Activated B cell treated with CpG ODN at 0.5 μM for 24 hours (primary cell): ENCODE measurements at regions of chr6 and their contacts with region 1.

Region 1: DNA sequence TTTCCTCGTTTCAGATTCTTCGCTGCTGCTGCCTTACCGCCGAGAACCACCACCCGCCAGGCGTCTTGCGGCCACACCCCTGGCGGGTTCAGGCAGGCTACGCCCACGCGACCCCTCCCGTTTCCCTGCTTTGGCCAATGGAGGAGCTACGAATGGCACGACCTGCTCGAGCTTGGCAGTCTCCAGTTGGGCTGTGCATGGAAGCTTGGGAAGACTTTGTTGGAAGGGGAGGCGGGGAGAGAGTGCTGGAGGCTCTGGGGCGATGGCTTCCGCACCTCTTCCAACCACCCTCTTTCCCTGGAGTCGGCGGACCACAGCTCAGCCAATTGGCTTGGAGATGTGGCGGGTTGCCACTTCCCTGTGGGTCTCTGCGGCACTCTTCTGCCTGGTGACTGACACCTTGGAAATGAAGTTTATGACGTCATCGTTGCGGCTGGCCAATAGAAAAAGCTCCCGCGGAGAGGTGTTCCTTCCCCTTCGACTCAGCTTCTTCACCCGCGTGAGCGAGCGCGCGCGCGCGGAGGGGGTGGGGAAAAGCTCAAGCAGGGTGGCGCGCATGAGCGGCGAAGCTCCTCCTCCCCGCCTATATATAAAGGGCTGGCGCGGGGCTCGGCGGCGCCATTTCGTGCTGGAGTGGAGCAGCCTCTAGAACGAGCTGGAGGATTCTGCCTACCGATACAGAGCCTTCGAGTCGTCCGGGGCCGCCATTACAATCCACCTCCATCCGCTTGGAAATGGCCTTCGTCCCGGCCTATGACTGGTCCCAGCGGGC is 3.4 kb downstream of the BRD2 start:
- DNase-seq: peak; percentile 99
- ATAC-seq: peak; percentile 47
- H3K4me3 Mint-ChIP-seq: peak overlapping the region; percentile 91
- H3K27ac Mint-ChIP-seq: peak overlapping the region; percentile 99
- H3K4me1 Mint-ChIP-seq: peaks cover 44% of the 10 kb centered on the region
- H3K27me3 Mint-ChIP-seq: no peaks in the 10 kb centered on the region
- CTCF ChIP-seq: no peak

Region 2: DNA sequence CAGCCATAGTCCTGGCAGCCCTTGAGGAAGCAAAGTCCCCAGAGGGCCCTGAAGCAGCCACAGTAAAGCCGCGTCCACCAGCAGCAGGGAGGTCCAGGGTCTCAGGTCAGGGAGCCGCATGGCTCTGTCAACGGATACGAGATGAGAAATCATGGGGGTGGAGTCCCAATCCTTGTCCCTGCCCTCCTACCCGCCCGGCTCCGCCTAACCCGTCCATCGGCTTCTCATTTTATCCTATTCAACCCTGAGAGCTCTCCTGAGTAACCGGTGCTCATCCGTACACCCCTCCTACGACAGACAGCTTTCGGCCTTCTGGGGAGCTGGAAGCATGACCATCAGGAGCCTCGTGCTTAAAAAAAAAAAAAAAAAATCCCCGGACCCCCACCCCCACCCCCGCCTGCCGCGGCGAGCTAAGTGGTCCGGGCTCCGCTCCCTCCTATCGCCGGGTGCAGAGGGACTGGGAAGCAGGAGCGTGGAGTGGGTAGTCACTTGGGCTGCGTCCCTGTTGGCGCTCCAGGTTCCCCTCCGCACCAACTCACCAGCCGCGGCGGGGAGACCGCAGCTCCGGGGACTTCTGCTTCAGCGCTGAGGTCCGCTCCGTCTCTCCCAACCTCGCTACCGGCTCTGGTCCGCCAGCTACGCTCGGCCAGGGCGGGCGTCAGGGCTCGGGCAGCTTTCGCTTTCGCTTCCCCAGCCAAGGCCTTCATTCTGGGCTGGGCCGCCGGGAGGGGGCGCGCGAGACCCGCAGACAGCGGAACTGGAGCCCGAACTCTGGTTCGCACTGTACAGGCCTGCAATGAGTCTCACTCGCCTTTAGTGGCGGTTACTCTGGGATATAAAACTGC is 133.4 kb before region 1 on chr6 and contains the start of gene TAP2:
- CTCF ChIA-PET with region 1: interaction called, 4 read pairs
- POLR2A ChIA-PET with region 1: interaction called, 190 read pairs
- intact Hi-C with region 1: loop called (anchors 1 kb)
- DNase-seq: peak; percentile 98
- ATAC-seq: peak; percentile 82
- H3K4me3 Mint-ChIP-seq: peak within 1 kb of the TSS; percentile 92
- H3K27ac Mint-ChIP-seq: peak within 1 kb of the TSS; percentile 100
- H3K4me1 Mint-ChIP-seq: peaks cover 91% of the 10 kb centered on the region
- H3K27me3 Mint-ChIP-seq: no peaks in the 10 kb centered on the region
- CTCF ChIP-seq: peak; percentile 23
- total RNA-seq, gene TAP2: 141 and 172 TPM in 2 replicates

Region 3: DNA sequence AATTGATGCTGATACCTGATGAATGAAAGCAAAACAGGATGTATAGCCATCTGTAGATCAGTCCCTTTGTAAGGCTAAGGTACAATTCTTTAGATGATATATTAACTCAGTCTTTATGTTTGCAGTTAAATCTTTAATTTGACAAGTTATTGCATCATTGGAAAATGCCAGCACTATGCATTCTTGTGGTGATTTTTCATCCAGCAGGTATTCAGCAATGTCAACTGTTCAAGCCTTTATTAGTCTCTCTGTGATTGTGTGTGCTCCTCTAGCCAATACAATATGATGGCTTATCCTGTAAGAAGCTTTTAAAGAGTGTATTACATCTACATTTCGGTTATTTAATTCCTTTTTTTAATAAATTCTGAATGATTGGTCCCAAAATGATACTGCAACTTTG is 65.2 kb before region 1 on chr6:
- CTCF ChIA-PET with region 1: interaction called, 3 read pairs
- POLR2A ChIA-PET with region 1: interaction called, 17 read pairs
- intact Hi-C with region 1: no loop called
- DNase-seq: no peak
- ATAC-seq: no peak
- H3K4me3 Mint-ChIP-seq: no peak overlapping the region
- H3K27ac Mint-ChIP-seq: no peak overlapping the region
- H3K4me1 Mint-ChIP-seq: peaks cover 21% of the 10 kb centered on the region
- H3K27me3 Mint-ChIP-seq: no peaks in the 10 kb centered on the region
- CTCF ChIP-seq: no peak

Region 4: GRCh38 chr6:32984605-32985389 is 13.0 kb after region 1 on chr6:
- CTCF ChIA-PET with region 1: interaction called, 48 read pairs
- POLR2A ChIA-PET with region 1: interaction called, 370 read pairs
- intact Hi-C with region 1: loop called (anchors 1 kb)
- DNase-seq: peak; percentile 74
- ATAC-seq: peak; percentile 90
- H3K4me3 Mint-ChIP-seq: no peak overlapping the region
- H3K27ac Mint-ChIP-seq: peak overlapping the region; percentile 73
- H3K4me1 Mint-ChIP-seq: peaks cover 32% of the 10 kb centered on the region
- H3K27me3 Mint-ChIP-seq: no peaks in the 10 kb centered on the region
- CTCF ChIP-seq: no peak

Region 5: GRCh38 chr6:33082702-33083101 is 110.9 kb after region 1 on chr6:
- CTCF ChIA-PET with region 1: no interaction called
- POLR2A ChIA-PET with region 1: interaction called, 12 read pairs
- intact Hi-C with region 1: no loop called
- DNase-seq: no peak
- ATAC-seq: peak; percentile 54
- H3K4me3 Mint-ChIP-seq: peak overlapping the region; percentile 89
- H3K27ac Mint-ChIP-seq: peak overlapping the region; percentile 78
- H3K4me1 Mint-ChIP-seq: peaks cover 74% of the 10 kb centered on the region
- H3K27me3 Mint-ChIP-seq: no peaks in the 10 kb centered on the region
- CTCF ChIP-seq: no peak

Region 6: DNA sequence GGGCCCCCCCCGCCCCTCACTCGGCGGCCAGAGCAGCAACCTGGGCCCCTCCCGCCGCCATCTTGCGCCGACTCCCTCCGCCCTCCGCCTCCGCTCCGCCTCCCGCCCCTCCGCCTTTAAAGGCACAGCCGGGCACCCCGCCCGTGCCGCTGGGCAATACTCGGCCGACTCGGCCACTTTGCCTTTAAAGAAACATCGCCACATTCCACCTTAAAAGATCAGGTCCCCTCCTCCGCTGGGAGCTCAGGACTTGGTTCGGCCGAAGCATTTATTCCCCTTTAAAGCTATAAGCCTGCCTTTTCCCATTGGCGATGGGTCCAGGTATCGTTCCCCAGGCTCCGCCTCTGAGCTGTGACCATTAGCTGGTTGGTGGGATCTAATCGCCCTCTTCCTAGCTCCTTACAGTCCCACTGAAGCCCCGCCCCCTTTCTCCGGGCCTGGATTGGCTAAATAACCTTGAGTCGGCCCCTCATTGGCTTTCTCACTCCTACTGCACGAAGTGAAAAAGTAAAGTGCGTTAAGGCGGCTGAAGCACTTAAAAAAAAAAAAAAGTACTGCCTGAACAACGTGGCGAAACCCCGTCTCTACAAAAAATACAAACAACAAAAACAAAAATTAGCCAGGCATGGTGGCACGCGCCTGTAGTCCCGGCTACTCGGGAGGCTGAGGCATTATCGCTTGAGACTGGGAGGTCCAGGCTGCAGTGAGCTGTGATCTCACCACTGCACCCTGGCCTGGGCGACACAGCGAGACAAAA is 346.1 kb after region 1 on chr6 and contains the start of gene ZBTB22:
- CTCF ChIA-PET with region 1: no interaction called
- POLR2A ChIA-PET with region 1: interaction called, 12 read pairs
- intact Hi-C with region 1: loop called (anchors 5 kb)
- DNase-seq: peak; percentile 91
- ATAC-seq: peak; percentile 59
- H3K4me3 Mint-ChIP-seq: peak within 1 kb of the TSS; percentile 99
- H3K27ac Mint-ChIP-seq: peak within 1 kb of the TSS; percentile 98
- H3K4me1 Mint-ChIP-seq: peaks cover 84% of the 10 kb centered on the region
- H3K27me3 Mint-ChIP-seq: no peaks in the 10 kb centered on the region
- CTCF ChIP-seq: no peak
- total RNA-seq, gene ZBTB22: 31.6 and 31.8 TPM in 2 replicates